Left colon (tissue), 2 donors: ENCODE measurements at regions of chr10 and their contacts with region 1.

Region 1: GRCh38 chr10:123582084-123582989 is 83.8 kb upstream of the GPR26 start:
- DNase-seq: peak; percentile 61 to 84
- ATAC-seq: peak; percentile 75

Region 2: GRCh38 chr10:123967396-123968243 is 385.3 kb after region 1 on chr10:
- intact Hi-C with region 1: loop called (anchors 2 to 5 kb)
- DNase-seq: peak; percentile 41 to 71
- ATAC-seq: peak; percentile 87

Region 3: GRCh38 chr10:124301736-124302135 is 719.4 kb after region 1 on chr10:
- intact Hi-C with region 1: loop called in 1 of 2 experiments (anchors 5 kb)
- DNase-seq: peak in 1 of 2 donors; percentile 8
- ATAC-seq: no peak